ENCODE measurements at regions of chr10 and their contacts with region 1.

Region 1: GRCh38 chr10:100998991-100999741 is 442 bp upstream of the LZTS2 start:
- DNase-seq: peak; percentile 94

Region 2: GRCh38 chr10:101014230-101014884 is 15.2 kb after region 1 on chr10:
- intact Hi-C with region 1: loop called (anchors 1 kb)
- DNase-seq: peak; percentile 88

Region 3: GRCh38 chr10:101031128-101031795 is 32.1 kb after region 1 on chr10 and contains the starts of genes PDZD7 and SFXN3:
- intact Hi-C with region 1: loop called (anchors 2 kb)
- DNase-seq: peak; percentile 99
- total RNA-seq, gene PDZD7: 0.40 TPM
- total RNA-seq, gene SFXN3: 30.8 TPM

Region 4: GRCh38 chr10:101060036-101060950 is 61.1 kb after region 1 on chr10:
- intact Hi-C with region 1: loop called (anchors 5 kb)
- DNase-seq: peak; percentile 92

Measured in cardiac septum (tissue), 1 donor.